OCI-LY7 (cell line): ENCODE measurements at regions of chr19 and their contacts with region 1.

Region 1: DNA sequence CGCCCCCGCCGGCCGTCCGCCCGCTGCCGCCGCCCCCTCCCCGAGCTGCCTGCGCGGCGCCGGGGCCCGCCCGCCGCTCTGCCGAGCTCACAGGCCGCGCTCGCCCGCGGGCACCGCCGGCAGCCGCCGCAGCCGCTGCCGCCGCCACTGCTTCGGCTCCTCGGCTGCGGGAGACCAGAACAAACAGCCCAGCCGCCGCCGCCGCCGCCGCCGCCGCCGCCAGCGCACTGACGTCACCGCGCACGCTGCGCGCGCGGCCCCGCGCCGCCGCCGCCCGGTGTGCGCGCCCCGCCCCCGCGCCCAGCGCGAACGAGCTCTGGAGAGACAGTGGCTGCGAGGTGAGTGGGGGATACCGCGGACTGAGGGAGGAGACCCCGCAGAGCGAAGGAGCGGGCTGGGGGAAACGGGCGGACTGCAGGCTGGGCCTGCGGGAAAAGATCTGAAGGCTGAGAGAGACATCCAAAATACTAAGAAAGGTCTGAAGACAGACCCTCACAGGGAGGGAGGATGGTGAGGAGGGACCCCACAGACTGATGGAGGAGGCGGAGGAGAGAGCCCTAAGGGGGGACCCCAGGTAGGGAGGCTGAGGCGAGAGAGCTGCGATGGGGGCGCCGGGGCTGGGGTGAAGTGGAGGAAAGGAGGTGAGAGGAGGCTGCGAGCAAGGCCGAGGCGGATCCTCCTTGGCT is at the start of gene BRD4:
- DNase-seq: peak; percentile 82
- H3K4me3 ChIP-seq: peak within 1 kb of the TSS; percentile 100
- H3K27ac ChIP-seq: peak within 1 kb of the TSS; percentile 97
- H3K4me1 ChIP-seq: peaks cover 52% of the 10 kb centered on the region
- CTCF ChIP-seq: no peak
- total RNA-seq, gene BRD4: 22.6 and 33.6 TPM in 2 replicates

Region 2: DNA sequence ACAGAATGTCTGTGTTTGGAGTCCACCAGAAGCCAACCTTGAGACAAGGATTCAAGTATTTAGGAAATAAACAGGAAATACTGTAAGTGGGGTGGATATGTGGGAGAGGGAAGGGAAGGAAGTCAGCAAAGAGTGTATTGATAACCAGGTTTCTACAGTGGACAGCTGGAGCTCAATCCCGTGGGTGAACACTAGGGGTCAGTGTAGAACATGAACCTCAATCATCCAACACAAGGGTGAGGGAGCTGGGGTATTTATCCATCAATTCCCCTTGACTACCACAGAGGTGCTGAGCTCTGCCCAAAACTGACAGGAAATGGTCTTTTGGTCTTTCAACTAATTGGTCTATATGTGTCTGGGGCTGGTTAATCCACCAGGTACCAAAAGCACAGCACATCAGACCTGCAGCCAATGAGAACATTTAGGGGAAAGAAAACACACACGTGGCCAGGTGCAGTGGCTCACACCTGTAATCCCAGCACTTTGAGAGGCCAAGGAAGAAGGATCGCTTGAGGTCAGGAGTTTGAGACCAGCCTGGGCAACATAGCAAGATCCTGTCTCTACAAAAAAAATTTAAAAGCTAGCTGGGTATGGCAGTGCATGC is 230.9 kb before region 1 on chr19:
- CTCF ChIA-PET with region 1: no interaction called
- POLR2A ChIA-PET with region 1: no interaction called
- intact Hi-C with region 1: no loop called
- DNase-seq: peak; percentile 44
- H3K4me3 ChIP-seq: no peak overlapping the region
- H3K27ac ChIP-seq: no peak overlapping the region
- H3K4me1 ChIP-seq: no peaks in the 10 kb centered on the region
- CTCF ChIP-seq: peak; percentile 81

Region 3: GRCh38 chr19:15247107-15248027 is 85.1 kb before region 1 on chr19:
- CTCF ChIA-PET with region 1: no interaction called
- POLR2A ChIA-PET with region 1: no interaction called
- intact Hi-C with region 1: no loop called
- DNase-seq: no peak
- H3K4me3 ChIP-seq: no peak overlapping the region
- H3K27ac ChIP-seq: no peak overlapping the region
- H3K4me1 ChIP-seq: no peaks in the 10 kb centered on the region
- CTCF ChIP-seq: no peak

Region 4: GRCh38 chr19:15288146-15288963 is 44.1 kb before region 1 on chr19:
- CTCF ChIA-PET with region 1: interaction called, 3 read pairs
- POLR2A ChIA-PET with region 1: interaction called, 4 read pairs
- intact Hi-C with region 1: loop called (anchors 2 kb)
- DNase-seq: peak; percentile 74
- H3K4me3 ChIP-seq: peak overlapping the region; percentile 44
- H3K27ac ChIP-seq: peak overlapping the region; percentile 87
- H3K4me1 ChIP-seq: peaks cover 100% of the 10 kb centered on the region
- CTCF ChIP-seq: no peak

Region 5: DNA sequence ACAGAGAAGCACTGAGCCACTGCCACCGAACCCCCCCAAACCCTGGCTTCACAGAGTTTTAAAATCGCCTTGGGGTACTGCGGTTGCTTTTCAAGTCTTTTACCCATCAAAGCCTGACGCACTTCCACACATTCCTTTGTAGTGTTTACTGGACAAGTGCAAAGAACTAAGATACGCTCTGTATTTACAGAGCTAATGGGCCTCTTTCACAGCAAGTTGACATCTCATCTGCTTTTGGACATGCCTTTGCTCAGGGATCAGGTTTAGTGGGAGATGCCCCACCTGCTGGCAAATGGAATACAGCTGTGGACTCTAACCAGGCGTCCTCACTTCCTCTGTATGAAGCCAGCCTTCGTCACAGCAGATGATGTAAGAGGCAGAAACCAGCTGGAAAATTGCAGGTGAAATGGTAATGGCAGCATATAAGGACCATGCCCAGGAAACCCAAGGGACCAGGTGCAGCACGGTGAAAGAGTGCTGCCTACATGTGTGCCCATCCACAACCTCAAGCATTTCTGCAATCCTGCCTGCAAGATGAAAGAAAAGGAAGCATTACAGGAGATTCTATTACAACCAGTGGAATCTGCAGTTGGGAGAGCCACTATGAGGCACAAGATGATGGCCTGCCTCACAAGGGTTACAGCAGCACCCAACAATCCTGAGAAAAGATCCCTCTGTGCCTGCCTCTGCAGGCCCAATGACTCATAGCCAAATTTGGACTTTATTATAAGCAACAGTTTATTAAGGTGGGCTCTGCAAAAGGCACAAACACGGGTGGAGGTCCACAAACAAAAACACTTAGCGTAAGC is 34.8 kb before region 1 on chr19:
- CTCF ChIA-PET with region 1: interaction called, 4 read pairs
- POLR2A ChIA-PET with region 1: interaction called, 4 read pairs
- intact Hi-C with region 1: loop called (anchors 2 kb)
- DNase-seq: peak; percentile 75
- H3K4me3 ChIP-seq: no peak overlapping the region
- H3K27ac ChIP-seq: peak overlapping the region; percentile 60
- H3K4me1 ChIP-seq: peaks cover 86% of the 10 kb centered on the region
- CTCF ChIP-seq: 0 out of 2 replicates have a peak, but pooled peaks have one; percentile 16

Region 6: GRCh38 chr19:15418588-15419412 is 86.3 kb after region 1 on chr19 and contains the start of gene AKAP8L:
- CTCF ChIA-PET with region 1: no interaction called
- POLR2A ChIA-PET with region 1: interaction called, 5 read pairs
- intact Hi-C with region 1: loop called (anchors 5 kb)
- DNase-seq: peak; percentile 100
- H3K4me3 ChIP-seq: peak within 1 kb of the TSS; percentile 84
- H3K27ac ChIP-seq: peak within 1 kb of the TSS; percentile 69
- H3K4me1 ChIP-seq: peaks cover 22% of the 10 kb centered on the region
- CTCF ChIP-seq: peak; percentile 82
- total RNA-seq, gene AKAP8L: 119 and 122 TPM in 2 replicates